Activated naive CD4-positive, alpha-beta T cell treated with anti-CD3 and anti-CD28 coated beads for 36 hours (primary cell): ENCODE measurements at regions of chr3 and their contacts with region 1.

Region 1: DNA sequence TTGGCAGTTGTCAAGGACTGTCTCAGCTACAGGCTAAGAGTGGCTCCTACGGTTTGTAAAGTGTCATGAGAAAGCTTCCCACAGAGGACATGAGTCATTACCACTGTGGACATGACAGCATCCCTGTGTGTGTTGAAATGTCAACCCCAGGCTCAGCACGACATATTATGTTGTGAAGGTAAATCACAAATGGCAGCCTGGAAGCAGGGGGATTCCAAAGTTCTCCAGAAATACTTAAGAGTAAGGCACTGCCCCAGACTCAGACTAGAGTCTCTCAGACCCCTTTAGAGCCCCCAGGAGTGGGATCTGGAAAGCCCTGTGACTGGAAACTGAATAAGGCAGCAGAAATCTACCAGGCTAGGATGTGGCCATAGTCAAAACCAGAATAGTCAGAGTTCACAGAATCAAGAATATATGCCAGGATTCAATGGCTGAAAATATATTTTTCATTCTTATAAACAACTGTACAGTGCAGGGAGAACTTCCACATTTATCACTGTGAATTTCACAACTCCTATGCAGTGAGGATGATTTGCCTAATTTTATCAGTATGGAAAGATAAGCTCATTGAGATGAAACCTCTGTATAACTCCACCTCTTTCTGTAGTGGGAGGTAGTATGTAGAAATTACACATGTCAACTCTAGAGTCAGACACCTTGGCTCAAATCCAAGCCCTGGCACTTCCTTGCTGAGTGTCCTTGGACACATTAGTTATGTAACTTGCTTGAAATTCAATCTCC is 237.1 kb upstream of the CFAP20DC start:
- DNase-seq: peak; percentile 50
- H3K4me3 Mint-ChIP-seq: no peak overlapping the region
- H3K27ac Mint-ChIP-seq: no peak overlapping the region
- H3K4me1 Mint-ChIP-seq: peaks cover 32% of the 10 kb centered on the region
- H3K27me3 Mint-ChIP-seq: no peaks in the 10 kb centered on the region

Region 2: DNA sequence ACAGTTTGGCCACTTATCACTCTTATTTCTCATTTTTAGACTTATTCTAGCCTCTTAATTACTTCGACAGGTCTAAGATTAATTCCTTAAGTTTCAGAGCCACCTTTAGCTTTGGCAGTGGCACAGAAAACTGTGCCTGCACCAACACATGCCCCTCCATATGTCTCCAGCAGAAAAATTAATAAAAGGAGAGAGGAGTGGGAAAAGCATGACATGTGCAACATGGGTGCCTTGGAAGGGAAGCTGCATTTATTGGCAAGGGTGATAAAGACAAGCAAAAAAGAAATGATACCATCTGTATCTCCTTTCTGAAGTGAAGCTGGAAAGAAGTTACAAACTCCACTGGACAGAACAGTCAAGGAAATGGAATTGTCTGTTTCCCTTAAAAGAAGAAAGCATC is 115.5 kb before region 1 on chr3:
- CTCF ChIA-PET with region 1: no interaction called
- intact Hi-C with region 1: no loop called
- DNase-seq: no peak
- H3K4me3 Mint-ChIP-seq: no peak overlapping the region
- H3K27ac Mint-ChIP-seq: no peak overlapping the region
- H3K4me1 Mint-ChIP-seq: no peaks in the 10 kb centered on the region
- H3K27me3 Mint-ChIP-seq: no peaks in the 10 kb centered on the region

Region 3: DNA sequence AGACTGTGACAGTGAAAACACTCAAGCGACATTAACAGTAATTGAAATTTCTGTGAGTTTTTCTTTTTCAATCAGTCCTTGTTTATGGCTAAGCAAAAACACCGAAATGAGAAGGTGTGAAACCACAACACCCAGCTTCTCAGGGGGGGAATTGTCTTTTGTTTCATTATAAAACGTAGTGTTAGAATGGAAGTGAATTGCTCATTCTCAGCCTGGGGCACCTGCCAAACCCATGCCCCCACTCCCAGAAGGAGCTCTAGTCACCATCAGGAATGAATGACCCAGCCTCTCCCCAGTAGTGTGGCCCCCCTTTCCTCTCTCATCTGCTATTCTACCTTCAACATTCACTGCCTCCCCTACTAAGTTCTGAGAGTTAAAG is 51.3 kb before region 1 on chr3:
- CTCF ChIA-PET with region 1: no interaction called
- intact Hi-C with region 1: loop called (anchors 1 kb)
- DNase-seq: peak; percentile 74
- H3K4me3 Mint-ChIP-seq: no peak overlapping the region
- H3K27ac Mint-ChIP-seq: no peak overlapping the region
- H3K4me1 Mint-ChIP-seq: peaks cover 8% of the 10 kb centered on the region
- H3K27me3 Mint-ChIP-seq: no peaks in the 10 kb centered on the region

Region 4: GRCh38 chr3:60424942-60425341 is 1138.0 kb after region 1 on chr3:
- CTCF ChIA-PET with region 1: no interaction called
- intact Hi-C with region 1: no loop called
- DNase-seq: no peak
- H3K4me3 Mint-ChIP-seq: no peak overlapping the region
- H3K27ac Mint-ChIP-seq: no peak overlapping the region
- H3K4me1 Mint-ChIP-seq: peaks cover 9% of the 10 kb centered on the region
- H3K27me3 Mint-ChIP-seq: no peaks in the 10 kb centered on the region